Transverse colon (tissue), 4 donors: ENCODE measurements at regions of chr10 and their contacts with region 1.

Region 1: DNA sequence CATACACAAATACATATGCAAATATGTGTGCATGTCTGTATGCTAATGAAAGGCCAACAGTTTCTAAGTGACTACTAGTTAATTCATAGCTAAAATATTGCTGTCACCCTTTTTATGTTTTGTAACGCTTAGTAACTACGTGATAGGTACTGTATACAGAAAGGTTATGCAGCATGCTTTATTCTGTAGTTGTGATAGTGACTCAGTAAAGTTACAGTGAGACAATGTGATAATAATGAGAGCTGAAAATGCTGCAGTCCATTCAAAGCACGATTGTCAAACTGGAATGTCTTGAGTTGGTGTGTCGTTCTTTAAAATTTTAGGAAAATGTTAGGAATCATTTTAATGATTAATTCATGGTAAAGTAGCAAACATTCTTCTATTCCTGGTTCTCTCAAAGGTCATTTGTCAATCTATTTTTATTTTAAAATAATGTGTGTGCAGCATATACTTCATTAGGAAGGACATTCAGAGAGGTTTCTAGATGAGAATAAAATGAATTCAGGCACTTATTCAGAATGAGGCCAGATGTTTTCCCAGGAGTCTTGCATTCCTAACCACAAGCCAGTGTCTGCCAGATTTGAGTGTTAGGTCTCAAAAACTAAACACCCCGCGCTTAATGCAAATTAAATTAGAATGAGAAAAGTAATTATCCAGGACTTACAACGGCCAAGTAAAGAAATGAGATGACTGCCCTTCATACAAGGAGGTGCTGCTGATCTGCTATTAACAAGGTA is 408.8 kb upstream of the FZD8 start:
- DNase-seq: no peak
- H3K4me3 ChIP-seq: no peak overlapping the region
- H3K27ac ChIP-seq: no peak overlapping the region
- H3K4me1 ChIP-seq: no peaks in the 10 kb centered on the region
- H3K27me3 ChIP-seq: no peaks in the 10 kb centered on the region
- CTCF ChIP-seq: no peak
- EP300 ChIP-seq: no peak
- POLR2A ChIP-seq: no peak

Region 2: DNA sequence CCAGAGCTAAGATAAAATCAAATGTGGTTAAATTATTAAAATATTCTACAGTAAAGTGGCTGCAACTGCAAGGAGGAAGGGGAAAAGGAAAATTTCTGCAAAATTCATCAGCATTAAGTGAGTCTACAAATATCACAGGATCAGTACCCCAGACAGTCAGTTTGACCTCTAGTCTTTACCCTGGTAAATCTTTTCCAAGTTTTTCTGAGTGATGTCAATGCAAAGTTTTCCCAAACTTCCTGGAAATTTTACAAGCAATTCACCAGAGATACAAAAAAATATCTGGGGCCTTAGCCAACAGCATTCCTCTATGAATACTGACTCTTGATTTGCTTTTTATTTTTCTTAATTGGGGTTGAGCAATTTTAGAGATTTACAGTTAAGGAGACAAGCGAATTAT is 130.5 kb after region 1 on chr10:
- in situ Hi-C with region 1: loop called in 1 of 4 experiments (anchors 25 kb)
- intact Hi-C with region 1: no loop called
- DNase-seq: no peak
- H3K4me3 ChIP-seq: no peak overlapping the region
- H3K27ac ChIP-seq: no peak overlapping the region
- H3K4me1 ChIP-seq: peaks cover 0 to 5% (median 0%) of the 10 kb centered on the region in 4 donors
- H3K27me3 ChIP-seq: no peaks in the 10 kb centered on the region
- CTCF ChIP-seq: no peak
- EP300 ChIP-seq: no peak
- POLR2A ChIP-seq: no peak